ENCODE measurements at regions of chr10 and their contacts with region 1.

Region 1: DNA sequence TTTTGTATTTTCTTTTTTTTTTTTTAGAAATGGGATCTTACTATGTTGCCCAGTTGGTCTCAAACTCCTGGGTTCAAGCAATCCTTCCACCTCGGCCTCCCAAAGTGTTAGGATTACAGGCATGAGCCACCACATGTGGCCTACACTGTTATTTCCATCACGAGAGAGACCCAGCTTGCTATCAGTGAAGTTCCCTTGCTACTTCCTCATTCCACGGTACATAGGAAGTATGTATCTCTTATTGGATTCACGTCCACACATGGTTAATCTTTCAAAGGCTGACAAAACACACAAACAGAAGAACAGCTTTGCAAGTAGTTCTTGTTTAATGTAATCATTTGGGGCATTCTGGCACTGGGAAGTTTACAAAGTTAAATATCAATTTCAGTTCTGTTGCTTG is 50.9 kb downstream of the DCLRE1A start:
- DNase-seq: no peak
- ATAC-seq: no peak
- H3K4me3 Mint-ChIP-seq: no peak overlapping the region
- H3K27ac Mint-ChIP-seq: no peak overlapping the region
- H3K4me1 Mint-ChIP-seq: peaks cover 2% of the 10 kb centered on the region
- H3K27me3 Mint-ChIP-seq: peaks cover 12% of the 10 kb centered on the region

Region 2: GRCh38 chr10:113704637-113705343 is 98.2 kb before region 1 on chr10:
- CTCF ChIA-PET with region 1: interaction called, 4 read pairs
- POLR2A ChIA-PET with region 1: no interaction called
- intact Hi-C with region 1: loop called in 1 of 2 experiments (anchors 5 kb)
- DNase-seq: peak; percentile 41
- ATAC-seq: no peak
- H3K4me3 Mint-ChIP-seq: no peak overlapping the region
- H3K27ac Mint-ChIP-seq: no peak overlapping the region
- H3K4me1 Mint-ChIP-seq: peaks cover 29% of the 10 kb centered on the region
- H3K27me3 Mint-ChIP-seq: no peaks in the 10 kb centered on the region

Region 3: GRCh38 chr10:113854011-113854760 is 51.2 kb after region 1 on chr10 and contains the starts of genes DCLRE1A and NHLRC2:
- CTCF ChIA-PET with region 1: no interaction called
- POLR2A ChIA-PET with region 1: no interaction called
- intact Hi-C with region 1: loop called in 1 of 2 experiments (anchors 5 kb)
- DNase-seq: peak; percentile 77
- ATAC-seq: peak; percentile 51
- H3K4me3 Mint-ChIP-seq: peak within 1 kb of the TSS; percentile 80
- H3K27ac Mint-ChIP-seq: peak within 1 kb of the TSS; percentile 97
- H3K4me1 Mint-ChIP-seq: peaks cover 39% of the 10 kb centered on the region
- H3K27me3 Mint-ChIP-seq: no peaks in the 10 kb centered on the region
- total RNA-seq, gene DCLRE1A: 12.5 to 14.4 TPM
- total RNA-seq, gene NHLRC2: 20.1 to 22.3 TPM

Region 4: DNA sequence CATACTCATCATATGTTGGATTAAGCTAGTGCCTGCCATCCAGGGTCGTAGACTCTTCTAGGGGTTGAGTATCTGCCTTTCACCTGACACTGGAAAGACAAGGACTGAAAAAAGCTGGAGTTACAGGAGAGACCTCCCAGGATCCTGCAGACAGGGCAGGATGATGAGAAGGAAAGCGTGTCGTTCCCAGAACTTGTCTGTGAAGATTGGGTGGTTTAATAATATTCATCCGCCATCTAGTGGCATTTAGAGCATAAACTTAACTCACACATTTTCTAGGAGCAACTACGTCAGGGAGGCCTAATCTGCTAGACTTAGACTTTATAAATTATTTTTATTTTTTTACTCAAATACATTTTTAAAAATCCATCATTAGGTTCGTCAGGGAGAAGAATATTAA is 300.3 kb after region 1 on chr10:
- CTCF ChIA-PET with region 1: interaction called, 12 read pairs
- POLR2A ChIA-PET with region 1: no interaction called
- intact Hi-C with region 1: loop called (anchors 1 kb)
- DNase-seq: no peak
- ATAC-seq: no peak
- H3K4me3 Mint-ChIP-seq: no peak overlapping the region
- H3K27ac Mint-ChIP-seq: no peak overlapping the region
- H3K4me1 Mint-ChIP-seq: peaks cover 22% of the 10 kb centered on the region
- H3K27me3 Mint-ChIP-seq: peaks cover 30% of the 10 kb centered on the region

Region 5: DNA sequence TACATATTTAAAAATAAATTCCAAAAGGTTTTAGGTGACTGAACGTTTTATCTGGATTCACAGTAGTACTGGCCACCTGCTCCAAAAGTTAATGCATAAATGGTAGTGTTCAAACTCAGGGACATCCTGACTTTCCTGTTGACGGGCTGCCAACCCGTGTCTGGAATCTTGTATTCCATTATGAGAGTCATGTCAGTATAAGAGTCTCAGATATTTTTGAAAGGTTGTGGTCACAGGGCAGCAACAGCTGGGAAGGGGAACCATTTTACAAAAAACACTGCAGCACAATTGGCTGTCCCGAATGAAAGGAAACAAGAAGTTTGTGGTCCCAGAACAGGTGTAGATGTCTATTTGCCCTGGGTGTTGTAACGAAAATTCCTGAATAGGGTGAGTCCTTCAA is 379.0 kb after region 1 on chr10:
- CTCF ChIA-PET with region 1: no interaction called
- POLR2A ChIA-PET with region 1: no interaction called
- intact Hi-C with region 1: no loop called
- DNase-seq: no peak
- ATAC-seq: no peak
- H3K4me3 Mint-ChIP-seq: no peak overlapping the region
- H3K27ac Mint-ChIP-seq: no peak overlapping the region
- H3K4me1 Mint-ChIP-seq: no peaks in the 10 kb centered on the region
- H3K27me3 Mint-ChIP-seq: peaks cover under 1% of the 10 kb centered on the region

Region 6: DNA sequence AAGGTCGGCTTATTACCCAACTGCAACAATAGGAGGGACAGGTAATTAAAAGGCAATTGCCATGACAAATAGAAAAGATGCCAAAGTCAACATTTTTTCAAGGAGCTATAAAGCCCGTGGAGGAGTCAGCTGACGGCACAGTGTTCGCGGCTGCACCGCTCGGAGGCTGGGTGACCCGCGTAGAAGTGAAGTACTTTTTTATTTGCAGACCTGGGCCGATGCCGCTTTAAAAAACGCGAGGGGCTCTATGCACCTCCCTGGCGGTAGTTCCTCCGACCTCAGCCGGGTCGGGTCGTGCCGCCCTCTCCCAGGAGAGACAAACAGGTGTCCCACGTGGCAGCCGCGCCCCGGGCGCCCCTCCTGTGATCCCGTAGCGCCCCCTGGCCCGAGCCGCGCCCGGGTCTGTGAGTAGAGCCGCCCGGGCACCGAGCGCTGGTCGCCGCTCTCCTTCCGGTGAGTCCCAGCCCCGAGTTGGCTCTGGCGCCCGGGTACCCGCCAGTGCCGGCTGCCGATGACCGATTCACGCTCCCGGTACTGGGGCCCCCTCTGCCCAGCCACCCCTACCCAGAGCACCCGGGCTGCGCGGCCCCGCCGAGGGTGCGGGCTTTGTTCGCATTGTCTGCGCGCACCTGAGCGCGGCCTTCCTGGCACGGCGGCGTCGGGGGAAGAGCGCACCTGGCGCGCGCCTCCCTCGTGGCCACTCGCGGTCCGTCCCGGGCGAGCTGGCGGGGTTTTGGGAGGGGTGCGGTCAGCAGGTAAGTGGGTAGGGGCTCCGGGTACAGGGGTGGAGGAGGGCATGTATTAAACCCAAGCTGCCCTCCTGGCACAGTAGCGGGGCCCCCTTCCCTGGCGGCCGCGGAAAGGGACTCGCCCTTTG is 436.4 kb after region 1 on chr10 and contains the start of gene VWA2:
- CTCF ChIA-PET with region 1: interaction called, 3 read pairs
- POLR2A ChIA-PET with region 1: no interaction called
- intact Hi-C with region 1: loop called in 1 of 2 experiments (anchors 2 kb)
- DNase-seq: peak; percentile 65
- ATAC-seq: peak; percentile 70
- H3K4me3 Mint-ChIP-seq: peak within 1 kb of the TSS; percentile 57
- H3K27ac Mint-ChIP-seq: no peak within 1 kb of the TSS
- H3K4me1 Mint-ChIP-seq: peaks cover 5% of the 10 kb centered on the region
- H3K27me3 Mint-ChIP-seq: peaks cover 51% of the 10 kb centered on the region
- total RNA-seq, gene VWA2: not detected